Motor neuron (in vitro differentiated cells): ENCODE measurements at regions of chr12 and their contacts with region 1.

Region 1: GRCh38 chr12:10235761-10236631 is 23.3 kb downstream of the GABARAPL1 start:
- ATAC-seq: peak in 7 of 8 experiments; percentile 45 to 76 (median 57)
- H3K4me3 ChIP-seq: no peak overlapping the region
- H3K27ac ChIP-seq: no peak overlapping the region
- H3K4me1 ChIP-seq: no peaks in the 10 kb centered on the region

Region 2: DNA sequence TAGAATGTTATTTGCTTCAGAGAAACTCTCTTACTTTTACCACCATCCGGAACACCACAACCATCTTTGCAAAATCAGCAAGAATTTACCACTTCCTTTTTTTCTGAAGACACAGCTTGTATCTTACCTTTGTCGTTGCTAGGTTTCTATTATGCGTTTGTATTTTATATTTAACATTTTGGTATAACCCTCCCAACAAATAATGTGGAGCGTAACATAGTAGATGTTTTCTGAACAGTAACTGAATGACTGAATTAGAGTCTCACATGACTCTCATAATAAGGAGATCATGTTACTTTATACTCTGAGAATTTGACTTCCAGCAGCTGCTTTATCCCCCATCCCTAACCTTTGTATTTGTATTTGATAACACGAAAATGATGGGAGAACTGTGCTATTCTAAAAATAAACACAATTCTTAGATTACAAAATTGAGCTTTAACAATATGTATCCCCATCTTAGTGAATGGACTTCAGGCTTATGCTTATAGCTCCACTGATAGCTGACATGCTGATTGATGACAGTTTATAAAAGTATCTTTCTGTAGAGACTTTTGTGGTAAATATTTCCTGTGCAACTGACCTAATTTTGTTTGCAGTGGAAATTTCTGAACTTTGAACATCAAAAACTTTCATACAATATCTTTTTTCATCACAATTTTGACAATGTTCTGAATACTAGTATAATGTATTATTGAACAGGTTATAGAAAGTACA is 620.4 kb before region 1 on chr12:
- in situ Hi-C with region 1: no loop called
- ATAC-seq: no peak
- H3K4me3 ChIP-seq: no peak overlapping the region
- H3K27ac ChIP-seq: no peak overlapping the region
- H3K4me1 ChIP-seq: no peaks in the 10 kb centered on the region

Region 3: GRCh38 chr12:10673660-10674384 is 437.8 kb after region 1 on chr12 and contains the start of gene STYK1:
- in situ Hi-C with region 1: loop called in 1 of 9 experiments (anchors 25 kb)
- ATAC-seq: peak; percentile 72 to 90 (median 84)
- H3K4me3 ChIP-seq: peak within 1 kb of the TSS; percentile 34 to 50 (median 41)
- H3K27ac ChIP-seq: no peak within 1 kb of the TSS
- H3K4me1 ChIP-seq: no peaks in the 10 kb centered on the region
- total RNA-seq, gene STYK1: 0.14 to 2.3 (median 0.18) TPM in 6 of 8 experiments, not detected in the others